ENCODE measurements at regions of chr19 and their contacts with region 1.

Region 1: DNA sequence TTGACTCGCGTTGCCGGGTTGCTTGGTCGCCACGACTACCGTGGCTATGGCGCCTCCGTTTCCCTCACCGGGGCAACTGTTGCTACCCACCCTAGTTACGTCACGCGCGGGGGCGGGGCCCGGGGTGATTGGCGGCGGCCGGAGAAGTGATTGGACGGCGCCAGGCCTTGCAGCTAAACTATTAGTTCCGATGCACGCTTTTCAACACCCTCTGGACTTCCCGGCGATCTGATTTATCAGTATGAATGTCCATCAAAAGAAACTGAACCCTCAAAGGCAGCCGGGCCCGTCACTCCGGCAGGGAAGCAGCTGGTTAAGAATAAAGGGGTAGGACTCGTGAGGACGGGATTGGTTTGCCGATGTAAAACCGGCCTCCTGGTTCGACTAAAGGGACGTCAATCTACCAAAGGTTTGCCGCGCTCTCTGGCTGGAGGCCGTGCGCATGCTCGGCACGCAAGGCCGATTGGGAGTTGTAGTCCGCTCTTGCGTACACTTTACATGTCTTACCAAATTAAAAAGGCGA is at the start of gene RFX1:
- DNase-seq: peak; percentile 98 to 100 (median 100)

Region 2: GRCh38 chr19:13899912-13900584 is 106.3 kb before region 1 on chr19:
- intact Hi-C with region 1: no loop called
- DNase-seq: no peak

Region 3: DNA sequence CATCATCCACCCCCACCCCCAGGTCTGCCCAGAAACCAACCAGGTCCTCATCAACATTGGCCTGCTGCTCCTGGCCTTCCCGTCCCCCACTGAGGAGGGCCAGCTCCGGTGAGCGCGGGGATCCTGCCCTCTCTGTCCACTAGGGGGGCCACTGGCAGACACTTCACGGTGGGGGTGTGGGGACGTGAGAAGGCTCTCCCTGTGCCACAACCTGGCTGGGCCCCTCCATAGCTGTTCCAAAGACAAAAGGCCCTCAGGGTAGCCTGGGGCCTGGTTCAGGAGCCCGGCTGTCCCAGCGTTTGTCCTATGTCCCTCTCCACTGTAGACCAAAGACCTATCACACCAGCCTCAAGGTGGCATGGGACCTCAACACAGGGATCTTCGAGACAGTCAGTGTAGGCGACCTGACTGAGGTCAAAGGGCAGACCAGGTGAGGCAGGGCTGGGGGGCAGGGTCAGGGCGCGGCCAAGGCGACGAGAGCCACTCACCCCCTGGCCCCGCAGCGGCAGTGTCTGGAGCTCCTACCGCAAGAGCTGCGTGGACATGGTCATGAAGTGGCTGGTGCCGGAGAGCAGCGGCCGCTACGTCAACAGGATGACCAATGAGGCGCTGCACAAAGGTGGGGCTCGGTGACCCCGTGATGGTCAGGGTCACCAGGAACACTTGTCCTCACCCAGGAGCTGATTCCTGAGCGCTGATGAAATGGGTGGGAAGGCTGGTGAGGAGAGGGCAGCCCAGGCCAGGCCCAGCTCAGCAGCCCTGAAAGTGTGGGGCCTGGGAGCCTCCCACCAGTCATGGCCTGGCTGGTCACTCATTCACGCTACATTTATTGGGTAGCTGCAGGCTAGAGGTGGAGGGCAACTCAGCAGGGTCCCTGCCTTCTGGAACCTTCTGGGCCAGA is 46.1 kb before region 1 on chr19:
- intact Hi-C with region 1: no loop called
- DNase-seq: no peak

Region 4: GRCh38 chr19:14031719-14032480 is 25.6 kb after region 1 on chr19 and contains the start of gene IL27RA:
- intact Hi-C with region 1: no loop called
- DNase-seq: peak in 9 of 10 donors; percentile 34 to 91 (median 48)

Region 5: GRCh38 chr19:14081325-14082093 is 75.2 kb after region 1 on chr19:
- intact Hi-C with region 1: loop called (anchors 5 kb)
- DNase-seq: peak; percentile 97 to 100 (median 98)

Region 6: GRCh38 chr19:14091813-14092462 is 85.6 kb after region 1 on chr19:
- intact Hi-C with region 1: no loop called
- DNase-seq: no peak

Measured in posterior cingulate gyrus (tissue), 11 donors.